ENCODE measurements at regions of chr5 and their contacts with region 1.

Region 1: GRCh38 chr5:149345147-149345875 is at the start of gene GRPEL2:
- DNase-seq: peak; percentile 97
- H3K4me3 Mint-ChIP-seq: peak within 1 kb of the TSS; percentile 97
- H3K27ac Mint-ChIP-seq: peak within 1 kb of the TSS; percentile 93
- H3K4me1 Mint-ChIP-seq: peaks cover 46% of the 10 kb centered on the region
- H3K27me3 Mint-ChIP-seq: no peaks in the 10 kb centered on the region
- total RNA-seq, gene GRPEL2: 32.9 to 37.2 TPM

Region 2: GRCh38 chr5:148397968-148398597 is 947.2 kb before region 1 on chr5:
- CTCF ChIA-PET with region 1: no interaction called
- POLR2A ChIA-PET with region 1: no interaction called
- intact Hi-C with region 1: no loop called
- DNase-seq: no peak
- H3K4me3 Mint-ChIP-seq: no peak overlapping the region
- H3K27ac Mint-ChIP-seq: no peak overlapping the region
- H3K4me1 Mint-ChIP-seq: peaks cover 58% of the 10 kb centered on the region
- H3K27me3 Mint-ChIP-seq: no peaks in the 10 kb centered on the region

Region 3: GRCh38 chr5:149317281-149318048 is 27.8 kb before region 1 on chr5:
- CTCF ChIA-PET with region 1: interaction called, 6 read pairs
- POLR2A ChIA-PET with region 1: interaction called, 7 read pairs
- intact Hi-C with region 1: loop called (anchors 2 kb)
- DNase-seq: peak; percentile 50
- H3K4me3 Mint-ChIP-seq: no peak overlapping the region
- H3K27ac Mint-ChIP-seq: no peak overlapping the region
- H3K4me1 Mint-ChIP-seq: peaks cover 1% of the 10 kb centered on the region
- H3K27me3 Mint-ChIP-seq: no peaks in the 10 kb centered on the region

Region 4: DNA sequence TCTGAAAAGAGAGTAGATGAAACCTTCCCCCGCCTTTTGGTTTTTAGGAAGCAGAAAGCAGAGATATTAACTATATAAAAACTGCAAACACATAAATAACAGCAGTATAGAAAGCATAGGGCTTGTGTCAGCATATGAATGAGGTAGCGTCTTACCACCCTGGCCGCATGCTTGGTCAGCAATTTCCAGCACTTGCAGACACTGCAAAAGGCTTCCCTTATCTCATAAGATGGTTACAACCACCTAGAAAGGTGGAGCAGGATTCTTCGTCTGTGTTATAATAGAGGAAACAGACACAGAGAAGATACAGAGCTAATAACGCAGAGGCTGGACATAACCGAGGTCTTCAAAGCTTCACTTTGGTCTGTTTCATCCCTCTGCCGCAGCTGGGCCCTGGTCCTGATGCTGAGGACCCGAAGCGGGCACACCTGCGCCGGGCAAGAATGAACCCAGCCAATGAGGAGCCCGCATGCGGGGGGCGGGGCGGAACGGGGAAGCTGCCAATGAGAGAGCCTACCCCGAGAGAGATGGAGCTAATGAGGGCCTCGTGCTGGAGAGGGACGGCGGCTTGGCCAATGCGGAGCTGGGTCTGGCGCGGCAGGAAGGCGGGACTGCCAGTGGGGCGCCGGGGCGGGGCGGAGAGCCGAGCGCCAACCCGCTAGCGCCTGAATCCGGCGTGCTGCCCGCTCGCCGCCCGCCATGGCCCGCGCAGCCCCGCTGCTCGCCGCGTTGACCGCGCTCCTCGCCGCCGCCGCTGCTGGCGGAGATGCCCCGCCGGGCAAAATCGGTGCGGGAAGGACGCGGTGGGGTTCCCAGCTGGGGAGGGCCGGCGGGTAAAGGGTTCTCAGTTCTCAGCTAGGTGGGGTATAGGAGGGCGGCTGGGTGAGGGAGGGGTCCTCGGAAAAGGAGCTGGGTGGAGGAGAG is 12.3 kb after region 1 on chr5 and contains the start of gene PCYOX1L:
- CTCF ChIA-PET with region 1: interaction called, 43 read pairs
- POLR2A ChIA-PET with region 1: interaction called, 140 read pairs
- intact Hi-C with region 1: loop called (anchors 1 kb)
- DNase-seq: peak; percentile 95
- H3K4me3 Mint-ChIP-seq: peak within 1 kb of the TSS; percentile 90
- H3K27ac Mint-ChIP-seq: peak within 1 kb of the TSS; percentile 89
- H3K4me1 Mint-ChIP-seq: peaks cover 64% of the 10 kb centered on the region
- H3K27me3 Mint-ChIP-seq: no peaks in the 10 kb centered on the region
- total RNA-seq, gene PCYOX1L: 21.8 to 24.0 TPM

Region 5: DNA sequence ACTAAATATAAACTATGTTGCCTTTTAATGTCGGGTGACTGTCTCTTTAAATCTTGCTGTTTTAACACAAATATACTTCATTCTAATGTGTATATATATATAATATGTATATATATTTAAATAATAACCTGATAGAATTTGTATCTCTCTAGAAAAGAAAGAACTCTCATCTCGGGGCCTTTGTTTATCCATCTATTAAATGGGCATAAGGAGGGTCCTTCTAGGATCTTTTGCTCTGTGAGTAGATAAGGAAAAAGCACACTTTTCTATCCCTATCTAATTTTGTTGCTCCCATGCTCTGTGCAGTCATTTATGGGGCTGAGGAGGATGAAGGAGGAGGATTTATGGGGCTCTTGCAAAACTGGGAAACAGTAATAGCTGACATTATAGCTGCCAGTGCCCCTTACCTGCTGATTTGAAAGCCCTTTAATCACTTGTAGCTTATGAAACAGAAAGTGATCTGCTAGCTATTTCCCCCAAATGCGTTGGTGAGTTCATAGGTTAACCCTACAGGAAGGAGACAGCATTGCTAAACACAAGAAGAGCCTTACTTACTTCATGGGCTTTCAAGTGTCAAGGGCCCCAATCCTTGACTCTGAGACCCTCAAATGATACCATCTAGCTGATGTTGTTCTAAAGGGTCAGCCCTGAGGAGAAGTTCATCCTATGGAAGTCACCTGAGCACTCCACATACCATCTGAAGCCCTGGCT is 379.0 kb after region 1 on chr5:
- CTCF ChIA-PET with region 1: no interaction called
- POLR2A ChIA-PET with region 1: no interaction called
- intact Hi-C with region 1: loop called (anchors 10 kb)
- DNase-seq: no peak
- H3K4me3 Mint-ChIP-seq: no peak overlapping the region
- H3K27ac Mint-ChIP-seq: no peak overlapping the region
- H3K4me1 Mint-ChIP-seq: peaks cover 7% of the 10 kb centered on the region
- H3K27me3 Mint-ChIP-seq: peaks cover 5% of the 10 kb centered on the region

Measured in activated CD4-positive, alpha-beta memory T cell treated with anti-CD3 and anti-CD28 coated beads for 36 hours (primary cell).